H1 (cell line): ENCODE measurements at regions of chr9 and their contacts with region 1.

Region 1: DNA sequence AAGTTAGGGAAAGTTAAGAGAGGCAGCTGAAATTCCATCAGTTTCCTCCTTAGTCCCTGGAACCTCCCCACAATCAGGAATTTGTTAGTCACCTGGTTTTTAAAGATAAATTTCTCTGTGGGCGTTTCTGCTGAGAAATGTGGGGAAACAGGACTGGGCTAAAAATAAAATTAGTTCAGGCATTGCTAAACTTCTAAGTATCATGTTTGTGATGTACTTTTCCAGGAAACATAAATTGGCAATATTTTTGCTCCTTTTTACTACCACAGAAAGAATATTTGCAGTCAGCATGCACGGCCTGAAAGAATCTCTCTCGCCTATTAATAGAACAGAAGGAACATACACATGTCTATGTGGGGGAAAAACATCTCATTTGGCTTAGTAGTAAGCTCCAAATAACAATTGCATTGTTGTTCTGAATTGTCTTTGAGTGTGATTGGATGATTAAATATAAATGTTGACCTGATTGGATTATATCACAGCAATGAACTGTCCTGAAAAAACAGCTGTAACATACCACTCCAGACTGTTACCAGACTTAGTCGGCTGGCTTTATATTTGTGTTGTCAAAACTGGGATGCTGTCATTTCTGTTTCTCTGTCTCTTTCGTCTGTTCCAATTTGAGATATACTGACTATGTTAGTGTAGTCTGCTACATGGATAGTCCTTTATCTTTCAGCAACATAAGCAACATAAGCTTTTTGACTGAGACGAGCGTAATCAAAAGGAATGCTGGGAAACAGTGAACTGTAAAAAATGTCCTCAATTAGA is 12.9 kb downstream of the TJP2 start:
- DNase-seq: no peak
- H3K4me3 ChIP-seq: no peak overlapping the region
- H3K27ac ChIP-seq: no peak overlapping the region
- H3K4me1 ChIP-seq: peaks cover 0 to 5% (median 0%) of the 10 kb centered on the region in 4 experiments; a peak in 1 of 7 replicates
- H3K27me3 ChIP-seq: no peaks in the 10 kb centered on the region
- CTCF ChIP-seq: no peak
- EP300 ChIP-seq: no peak
- POLR2A ChIP-seq: no peak
- RAD21 ChIP-seq: no peak

Region 2: DNA sequence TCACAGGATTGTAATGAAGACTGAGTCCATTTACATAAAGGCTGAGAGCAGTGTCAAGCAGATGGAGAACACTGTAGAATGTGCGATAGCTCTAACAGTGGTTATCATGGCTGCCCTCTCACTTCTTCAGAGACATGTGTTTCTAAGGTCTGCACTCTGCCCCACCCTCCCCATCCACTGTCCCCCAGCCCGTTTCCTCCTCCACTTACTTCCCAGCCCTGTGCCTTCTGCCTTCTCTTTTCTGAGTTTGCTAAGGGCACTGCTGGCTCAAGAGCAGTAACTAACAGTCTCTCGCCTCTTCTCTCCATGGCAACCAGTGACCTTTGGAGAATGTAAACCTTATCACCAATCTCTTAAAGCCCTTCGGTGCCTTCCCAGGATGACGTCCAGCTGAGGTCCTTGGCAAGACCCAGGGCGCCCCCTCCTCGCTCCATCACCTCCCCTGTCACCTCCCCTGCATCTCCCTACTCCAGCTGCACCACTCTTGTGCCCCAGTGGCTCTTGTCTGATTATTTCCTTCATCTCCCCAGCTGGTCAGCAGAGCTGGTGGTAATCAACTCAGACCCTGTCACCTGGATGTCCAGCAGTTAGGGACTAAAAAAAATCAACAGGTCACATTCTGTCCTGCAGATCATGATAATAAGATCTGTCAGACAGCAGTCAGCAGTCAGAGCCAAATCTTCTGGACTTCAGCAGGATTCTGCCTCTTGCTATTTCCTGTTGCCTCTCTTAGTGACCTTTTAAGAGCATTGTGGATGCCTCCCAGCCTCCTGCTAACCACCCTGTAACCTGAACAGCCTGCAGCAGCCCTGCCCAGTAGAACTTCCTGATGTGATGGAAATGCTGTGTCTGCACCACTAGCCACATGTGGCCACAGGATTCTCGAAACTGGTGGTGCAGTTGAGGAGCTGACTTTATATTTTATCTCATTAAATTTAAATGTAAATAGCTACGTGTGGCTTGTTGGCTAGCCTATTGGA is 142.5 kb before region 1 on chr9:
- CTCF ChIA-PET with region 1: interaction called, 100 read pairs
- POLR2A ChIA-PET with region 1: no interaction called
- DNase-seq: no peak
- H3K4me3 ChIP-seq: no peak overlapping the region
- H3K27ac ChIP-seq: no peak overlapping the region
- H3K4me1 ChIP-seq: peaks cover 9 to 22% (median 14%) of the 10 kb centered on the region in 4 experiments
- H3K27me3 ChIP-seq: no peaks in the 10 kb centered on the region
- CTCF ChIP-seq: no peak
- EP300 ChIP-seq: no peak
- POLR2A ChIP-seq: no peak
- RAD21 ChIP-seq: no peak

Region 3: DNA sequence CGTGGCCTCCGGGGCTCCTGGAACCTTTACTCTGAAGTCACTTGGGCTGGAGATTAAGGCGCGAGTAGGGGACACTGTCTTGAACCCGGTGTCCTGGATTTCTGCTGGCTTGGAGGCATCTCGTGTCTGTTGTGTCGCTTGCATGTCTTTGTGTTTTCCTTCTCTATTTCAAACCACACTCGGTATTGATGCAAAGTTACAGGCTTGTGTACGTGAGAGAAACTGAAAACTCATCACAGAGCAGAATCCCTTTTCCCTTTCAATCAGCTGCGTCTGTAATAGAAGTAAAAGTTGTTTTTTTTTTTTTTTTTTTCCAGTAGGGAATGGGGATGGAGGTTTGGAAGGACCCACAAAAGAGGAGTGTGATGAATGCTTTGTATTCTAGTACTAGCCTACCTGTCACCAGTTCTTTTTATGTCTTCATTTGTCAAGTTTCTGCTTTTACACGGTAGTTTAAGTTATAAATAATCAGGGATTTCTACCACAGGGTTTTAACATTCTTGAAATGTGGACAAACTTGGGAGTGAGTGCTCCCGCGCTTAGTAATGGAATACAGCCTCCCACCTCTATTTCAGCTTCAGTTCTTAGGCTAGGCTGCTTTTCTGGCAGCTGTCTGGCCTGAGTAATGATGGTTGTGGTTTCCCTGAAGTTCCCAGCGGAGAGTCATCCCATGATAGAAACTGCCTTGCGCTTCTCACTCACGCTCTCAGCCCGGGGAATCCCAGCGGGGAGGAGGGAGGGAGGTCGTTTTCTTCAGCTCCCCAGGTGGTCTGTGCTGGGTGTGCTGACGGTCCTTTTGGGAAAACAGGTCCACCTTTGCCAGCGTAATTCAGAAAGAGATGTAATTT is 12.2 kb before region 1 on chr9:
- CTCF ChIA-PET with region 1: interaction called, 61 read pairs
- POLR2A ChIA-PET with region 1: interaction called, 6 read pairs
- DNase-seq: no peak
- H3K4me3 ChIP-seq: peak overlapping the region; percentile 26 to 64 (median 50)
- H3K27ac ChIP-seq: no peak overlapping the region
- H3K4me1 ChIP-seq: peaks cover 6 to 17% (median 15%) of the 10 kb centered on the region in 4 experiments; a peak in 6 of 7 replicates
- H3K27me3 ChIP-seq: peaks cover 0 to 7% (median 3%) of the 10 kb centered on the region in 4 experiments; a peak in 3 of 7 replicates
- CTCF ChIP-seq: no peak
- EP300 ChIP-seq: no peak
- POLR2A ChIP-seq: peak in 1 of 2 experiments; percentile 24; a peak in 1 of 3 replicates
- RAD21 ChIP-seq: no peak